Motor neuron (in vitro differentiated cells): ENCODE measurements at regions of chr15 and their contacts with region 1.

Region 1: GRCh38 chr15:37100109-37100965 is at the start of gene MEIS2:
- ATAC-seq: peak; percentile 24 to 76 (median 66)
- H3K4me3 ChIP-seq: peak within 1 kb of the TSS; percentile 61 to 99 (median 81)
- H3K27ac ChIP-seq: peak within 1 kb of the TSS; percentile 72 to 90
- H3K4me1 ChIP-seq: no peaks in the 10 kb centered on the region
- total RNA-seq, gene MEIS2: 21.5 to 747 (median 133) TPM

Region 2: DNA sequence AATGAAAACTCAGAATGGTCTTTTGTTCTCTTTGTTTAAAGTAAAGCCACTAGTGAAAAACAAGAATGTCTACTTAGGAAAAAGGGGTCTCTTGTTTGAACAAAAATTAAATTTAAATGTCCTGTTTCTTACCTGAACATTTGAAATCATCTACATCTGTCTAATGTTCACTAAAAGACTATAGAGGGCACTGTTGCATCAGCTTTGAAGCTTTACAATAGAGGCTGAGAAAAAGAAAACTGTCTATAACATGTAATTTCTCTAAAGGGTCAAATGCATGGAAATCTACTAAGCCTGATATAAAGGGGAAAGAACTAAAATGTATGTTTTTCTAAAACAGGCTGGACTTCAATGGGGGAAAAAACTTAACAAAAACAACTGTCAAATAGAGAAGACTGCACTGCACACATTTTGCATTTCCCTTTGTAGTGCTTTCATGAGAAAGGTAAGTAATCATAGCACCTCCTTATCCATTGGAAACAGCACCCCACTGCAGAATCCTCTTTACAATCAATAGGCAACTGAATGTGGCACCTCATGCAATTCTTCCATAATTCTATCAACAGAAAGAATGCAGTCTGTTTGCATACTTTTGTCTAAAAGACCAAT is 1580.7 kb before region 1 on chr15:
- in situ Hi-C with region 1: loop called in 1 of 9 experiments (anchors 25 kb)
- ATAC-seq: peak; percentile 79 to 93 (median 81)
- H3K4me3 ChIP-seq: no peak overlapping the region
- H3K27ac ChIP-seq: no peak overlapping the region
- H3K4me1 ChIP-seq: peaks cover 10 to 39% of the 10 kb centered on the region in 2 donors

Region 3: GRCh38 chr15:35751413-35752133 is 1348.8 kb before region 1 on chr15:
- in situ Hi-C with region 1: loop called in 1 of 9 experiments (anchors 25 kb)
- ATAC-seq: peak; percentile 90 to 97 (median 94)
- H3K4me3 ChIP-seq: no peak overlapping the region
- H3K27ac ChIP-seq: no peak overlapping the region
- H3K4me1 ChIP-seq: peaks cover 19 to 30% of the 10 kb centered on the region in 2 donors

Region 4: DNA sequence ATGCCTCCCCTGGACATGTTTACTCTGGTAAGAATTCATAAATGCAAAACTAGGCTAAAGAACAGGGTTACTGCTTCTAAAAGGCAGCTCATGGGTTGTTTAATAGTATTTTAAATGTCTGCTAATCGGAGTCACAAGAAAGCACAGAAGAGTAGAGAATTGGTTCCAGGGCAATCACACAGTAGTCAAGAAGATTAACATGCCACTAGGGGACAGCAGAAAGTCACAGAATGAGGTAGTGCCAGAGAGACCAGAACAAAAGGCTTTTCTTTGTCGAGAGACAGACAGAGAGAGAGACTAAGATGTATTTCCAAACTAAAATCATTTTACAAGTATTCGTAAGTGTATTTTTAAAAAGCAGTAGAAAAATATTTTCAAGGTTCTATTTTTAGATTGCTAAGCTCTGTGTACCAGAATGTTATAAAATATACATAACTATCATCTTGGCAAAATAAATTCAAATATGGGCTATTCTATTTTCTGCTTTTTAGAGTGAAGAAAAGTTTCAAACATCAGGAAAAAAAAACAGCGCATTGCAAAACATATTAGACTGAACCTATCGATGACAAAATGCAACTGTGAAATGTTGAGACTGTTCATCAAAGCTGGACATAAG is 599.2 kb before region 1 on chr15:
- in situ Hi-C with region 1: loop called in 4 of 9 experiments (anchors 25 kb)
- ATAC-seq: peak; percentile 97 to 100 (median 99)
- H3K4me3 ChIP-seq: no peak overlapping the region
- H3K27ac ChIP-seq: peak overlapping the region; percentile 49 to 81
- H3K4me1 ChIP-seq: peaks cover 33 to 58% of the 10 kb centered on the region in 2 donors

Region 5: GRCh38 chr15:36883713-36884517 is 216.4 kb before region 1 on chr15:
- in situ Hi-C with region 1: loop called (anchors 10 to 25 kb)
- ATAC-seq: peak; percentile 57 to 99 (median 67)
- H3K4me3 ChIP-seq: peak overlapping the region; percentile 29 to 41 (median 37)
- H3K27ac ChIP-seq: peak overlapping the region; percentile 34 to 90
- H3K4me1 ChIP-seq: peaks cover 32 to 52% of the 10 kb centered on the region in 2 donors

Region 6: GRCh38 chr15:36951731-36952247 is 148.5 kb before region 1 on chr15:
- in situ Hi-C with region 1: no loop called
- ATAC-seq: peak; percentile 88 to 98 (median 96)
- H3K4me3 ChIP-seq: no peak overlapping the region
- H3K27ac ChIP-seq: no peak overlapping the region
- H3K4me1 ChIP-seq: peaks cover 48 to 71% of the 10 kb centered on the region in 2 donors

Region 7: DNA sequence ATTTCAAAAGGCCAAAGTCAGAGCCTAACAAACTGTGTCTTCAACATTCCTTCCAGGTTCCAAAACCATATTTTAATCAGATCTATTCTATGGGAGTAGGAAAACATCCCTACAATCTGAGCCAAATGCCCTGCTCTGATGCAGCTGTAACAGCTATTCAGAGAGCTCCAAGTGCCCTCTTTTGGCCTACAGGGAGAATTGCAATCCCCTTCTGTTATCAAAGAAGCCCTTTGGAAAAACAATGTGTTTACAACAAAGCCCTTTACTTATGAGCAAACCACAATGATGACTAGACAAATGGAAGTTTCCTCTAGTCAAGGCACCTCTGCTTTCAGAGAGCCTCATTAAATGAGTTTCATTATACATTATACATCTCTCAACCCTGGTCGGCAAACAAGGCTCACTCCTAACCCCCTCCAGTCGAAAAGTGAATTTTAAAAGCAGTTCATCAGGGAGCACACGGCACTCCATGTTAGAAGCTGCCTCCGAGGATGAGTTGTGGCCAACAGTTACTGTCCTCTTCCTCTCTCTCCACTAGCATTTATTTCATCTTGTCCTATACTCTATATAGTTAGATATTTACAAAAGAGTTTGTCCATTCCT is 791.5 kb after region 1 on chr15:
- in situ Hi-C with region 1: loop called in 4 of 9 experiments (anchors 25 kb)
- ATAC-seq: peak; percentile 75 to 90 (median 83)
- H3K4me3 ChIP-seq: no peak overlapping the region
- H3K27ac ChIP-seq: no peak overlapping the region
- H3K4me1 ChIP-seq: peaks cover 0 to 8% of the 10 kb centered on the region in 2 donors